Common myeloid progenitor, CD34-positive (primary cell): ENCODE measurements at regions of chr5 and their contacts with region 1.

Region 1: DNA sequence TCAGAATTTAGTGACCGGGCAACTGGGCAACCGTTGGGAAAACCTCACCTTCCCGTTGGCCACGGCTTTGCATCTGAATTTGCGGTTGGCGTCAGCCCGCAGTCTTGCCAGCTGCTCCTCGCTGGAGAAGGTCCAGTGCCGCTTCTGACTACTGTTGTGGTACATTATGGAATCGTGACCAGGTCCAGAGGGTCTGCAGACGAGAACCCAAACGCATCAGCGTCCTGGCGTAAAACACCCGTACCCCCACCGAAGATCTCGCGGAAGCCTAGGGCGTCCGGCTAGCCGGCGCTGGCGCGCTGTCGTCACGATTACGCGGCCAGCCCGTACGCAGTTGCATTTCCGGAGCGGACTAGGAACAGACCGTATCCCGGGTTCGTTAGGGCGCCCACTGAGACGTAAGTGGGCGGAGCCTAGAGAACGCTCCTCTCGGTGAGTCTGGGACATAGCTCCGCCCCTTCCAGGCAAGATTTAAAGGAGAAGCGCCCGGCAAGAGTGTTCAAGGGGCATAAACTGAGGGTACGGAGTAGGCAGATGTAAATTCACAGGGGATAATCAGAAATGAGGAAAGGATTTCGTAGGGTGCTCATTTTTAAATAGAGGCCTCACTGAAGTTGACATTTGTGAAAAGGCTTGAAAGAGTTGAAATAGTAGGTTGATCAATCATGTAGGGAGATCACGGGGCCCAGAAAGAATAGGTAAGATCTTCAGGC is at the start of gene CCNH:
- DNase-seq: peak; percentile 98 to 99 (median 99)
- H3K4me3 ChIP-seq: peak within 1 kb of the TSS; percentile 64 to 99 (median 97)
- H3K27ac ChIP-seq: peak within 1 kb of the TSS; percentile 97 to 98
- H3K4me1 ChIP-seq: peaks cover 9 to 20% (median 14%) of the 10 kb centered on the region in 4 experiments
- H3K27me3 ChIP-seq: no peaks in the 10 kb centered on the region

Region 2: DNA sequence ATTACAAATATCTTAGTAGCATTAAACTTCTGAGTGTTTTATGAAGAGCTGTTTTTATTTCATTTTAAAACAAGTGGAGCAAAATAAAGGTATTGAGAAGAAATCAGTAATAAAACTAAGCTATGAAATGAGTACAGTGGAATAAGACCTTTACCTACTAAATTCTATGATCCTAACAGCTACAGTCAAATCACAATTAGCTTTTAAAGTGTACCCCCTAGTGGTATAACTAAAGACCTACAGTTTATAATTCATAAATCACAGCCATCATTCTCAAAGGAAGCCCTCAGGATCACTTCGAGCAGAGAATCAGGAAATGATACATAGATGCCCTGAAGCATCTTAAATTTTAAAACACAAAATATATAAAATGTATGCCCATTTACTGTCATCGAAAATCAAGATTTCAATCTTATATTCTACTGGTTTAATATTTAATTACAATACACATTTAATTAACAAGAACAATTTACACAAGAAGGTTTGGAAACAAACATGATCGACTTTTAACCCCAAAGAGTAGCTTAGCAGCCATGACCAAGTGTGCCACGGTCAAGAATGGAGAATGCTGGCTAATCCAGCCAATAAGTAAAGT is 12.4 kb before region 1 on chr5:
- CTCF ChIA-PET with region 1: interaction called, 13 read pairs
- POLR2A ChIA-PET with region 1: interaction called, 3 read pairs
- DNase-seq: peak; percentile 38 to 53 (median 51)
- H3K4me3 ChIP-seq: no peak overlapping the region
- H3K27ac ChIP-seq: no peak overlapping the region
- H3K4me1 ChIP-seq: peaks cover 0 to 12% (median 9%) of the 10 kb centered on the region in 4 experiments
- H3K27me3 ChIP-seq: no peaks in the 10 kb centered on the region

Region 3: GRCh38 chr5:87430863-87431457 is 18.2 kb after region 1 on chr5:
- CTCF ChIA-PET with region 1: no interaction called
- POLR2A ChIA-PET with region 1: no interaction called
- DNase-seq: no peak
- H3K4me3 ChIP-seq: no peak overlapping the region
- H3K27ac ChIP-seq: no peak overlapping the region
- H3K4me1 ChIP-seq: no peaks in the 10 kb centered on the region
- H3K27me3 ChIP-seq: peaks cover 0 to 4% (median 0%) of the 10 kb centered on the region in 5 experiments

Region 4: GRCh38 chr5:87780831-87781760 is 368.3 kb after region 1 on chr5:
- CTCF ChIA-PET with region 1: no interaction called
- POLR2A ChIA-PET with region 1: no interaction called
- DNase-seq: peak; percentile 82 to 93 (median 92)
- H3K4me3 ChIP-seq: no peak overlapping the region
- H3K27ac ChIP-seq: no peak overlapping the region
- H3K4me1 ChIP-seq: no peaks in the 10 kb centered on the region
- H3K27me3 ChIP-seq: peaks cover 5 to 49% (median 16%) of the 10 kb centered on the region in 5 experiments